Right lobe of liver (tissue), 6 donors: ENCODE measurements at regions of chr11 and their contacts with region 1.

Region 1: GRCh38 chr11:84261707-84262106 is 975.5 kb upstream of the CCDC90B start:
- DNase-seq: peak; percentile 22 to 60 (median 47)
- ATAC-seq: peak; percentile 99 to 100 (median 100)
- H3K4me3 ChIP-seq: no peak overlapping the region
- H3K27ac ChIP-seq: no peak overlapping the region
- H3K4me1 ChIP-seq: no peaks in the 10 kb centered on the region
- H3K27me3 ChIP-seq: no peaks in the 10 kb centered on the region
- CTCF ChIP-seq: peak; percentile 67 to 82 (median 72)
- POLR2A ChIP-seq: no peak

Region 2: DNA sequence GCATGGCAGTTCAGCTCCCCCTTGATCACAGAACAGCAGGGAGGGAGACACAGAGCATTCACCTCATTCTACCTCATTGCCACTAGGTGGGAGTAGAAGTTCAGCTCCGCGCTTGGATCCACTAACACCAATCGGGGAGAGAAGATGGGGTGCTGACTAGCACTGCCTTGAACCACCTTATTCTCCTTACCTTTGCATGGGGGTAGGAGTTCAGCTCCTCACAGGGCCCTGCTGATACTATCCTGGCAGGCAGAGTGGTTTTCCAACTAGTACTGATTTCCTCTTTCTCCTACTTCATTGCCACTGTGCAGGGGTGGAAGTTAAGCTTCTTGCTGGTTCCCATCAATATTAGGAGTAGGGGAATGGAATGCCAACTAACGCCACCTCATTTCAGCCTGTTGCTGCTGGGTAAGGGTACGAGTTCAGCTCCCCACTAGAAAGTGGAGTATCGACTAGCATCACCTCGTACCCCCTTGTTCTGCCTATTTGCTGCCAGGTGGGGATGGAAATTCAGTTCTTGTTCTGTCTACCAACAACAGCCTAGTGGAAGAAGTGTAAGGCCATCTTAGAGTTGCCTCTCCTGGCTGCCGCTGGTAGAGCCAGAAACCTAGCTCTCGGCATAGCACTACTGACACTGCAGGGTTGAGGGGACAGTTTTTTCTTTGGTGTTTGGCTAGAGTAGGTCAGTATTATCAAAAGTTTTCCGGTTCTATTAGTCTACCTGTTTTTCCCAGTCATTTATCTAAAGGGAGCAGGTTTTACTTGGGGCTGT is 424.6 kb before region 1 on chr11:
- intact Hi-C with region 1: loop called (anchors 10 kb)
- DNase-seq: peak; percentile 27 to 61 (median 58)
- ATAC-seq: peak; percentile 92 to 95 (median 93)
- H3K4me3 ChIP-seq: no peak overlapping the region
- H3K27ac ChIP-seq: no peak overlapping the region
- H3K4me1 ChIP-seq: peaks cover 0 to 17% (median 7%) of the 10 kb centered on the region in 4 donors
- H3K27me3 ChIP-seq: no peaks in the 10 kb centered on the region
- CTCF ChIP-seq: peak; percentile 71 to 83 (median 82)
- POLR2A ChIP-seq: no peak